PC-3 (cell line): ENCODE measurements at regions of chr2 and their contacts with region 1.

Region 1: GRCh38 chr2:65382776-65383357 is 49.5 kb downstream of the SPRED2 start:
- DNase-seq: peak; percentile 99
- ATAC-seq: peak; percentile 78
- H3K4me3 ChIP-seq: peak overlapping the region; percentile 40; the same call in 1 of the 2 replicates
- H3K27ac ChIP-seq: peak overlapping the region; percentile 94
- H3K4me1 ChIP-seq: peaks cover 76% of the 10 kb centered on the region
- H3K27me3 ChIP-seq: no peaks in the 10 kb centered on the region
- CTCF ChIP-seq: peak; percentile 73

Region 2: DNA sequence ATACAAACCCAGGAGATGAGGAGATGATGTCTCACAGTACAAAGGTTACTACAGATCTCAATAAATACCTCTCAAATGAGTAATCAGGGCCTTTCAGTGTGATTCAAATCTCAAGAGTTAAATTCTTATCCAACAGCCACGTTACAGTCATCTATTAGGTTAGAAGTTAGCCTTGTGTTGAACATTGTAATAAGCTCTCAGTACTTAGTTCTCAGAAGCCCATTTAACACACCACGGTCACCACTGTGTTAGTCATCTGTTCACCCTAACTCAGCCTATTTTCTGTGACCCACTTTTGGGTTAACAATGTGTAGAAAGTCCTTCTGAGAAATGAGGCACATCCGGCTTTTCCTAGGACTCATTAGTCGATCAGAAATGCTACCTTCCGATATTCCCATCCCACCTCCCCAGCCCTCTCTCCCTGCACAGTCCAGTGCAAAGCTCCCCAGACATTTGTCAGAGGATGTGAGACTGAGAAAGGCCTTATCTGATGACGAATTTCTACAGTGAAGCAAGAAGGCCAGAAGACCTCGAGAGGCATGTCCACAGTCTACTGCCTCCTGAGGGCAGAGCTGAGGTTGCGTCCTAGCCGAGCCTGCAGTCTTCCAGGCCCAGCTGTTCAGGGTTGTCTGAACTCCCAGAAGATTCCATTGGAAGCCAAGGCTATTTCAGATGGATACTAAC is 62.7 kb before region 1 on chr2:
- CTCF ChIA-PET with region 1: no interaction called
- POLR2A ChIA-PET with region 1: no interaction called
- intact Hi-C with region 1: loop called (anchors 5 kb)
- DNase-seq: peak; percentile 97
- ATAC-seq: peak; percentile 76
- H3K4me3 ChIP-seq: peak overlapping the region; percentile 33; the same call in 1 of the 2 replicates
- H3K27ac ChIP-seq: peak overlapping the region; percentile 93
- H3K4me1 ChIP-seq: peaks cover 75% of the 10 kb centered on the region
- H3K27me3 ChIP-seq: no peaks in the 10 kb centered on the region
- CTCF ChIP-seq: peak; percentile 74

Region 3: DNA sequence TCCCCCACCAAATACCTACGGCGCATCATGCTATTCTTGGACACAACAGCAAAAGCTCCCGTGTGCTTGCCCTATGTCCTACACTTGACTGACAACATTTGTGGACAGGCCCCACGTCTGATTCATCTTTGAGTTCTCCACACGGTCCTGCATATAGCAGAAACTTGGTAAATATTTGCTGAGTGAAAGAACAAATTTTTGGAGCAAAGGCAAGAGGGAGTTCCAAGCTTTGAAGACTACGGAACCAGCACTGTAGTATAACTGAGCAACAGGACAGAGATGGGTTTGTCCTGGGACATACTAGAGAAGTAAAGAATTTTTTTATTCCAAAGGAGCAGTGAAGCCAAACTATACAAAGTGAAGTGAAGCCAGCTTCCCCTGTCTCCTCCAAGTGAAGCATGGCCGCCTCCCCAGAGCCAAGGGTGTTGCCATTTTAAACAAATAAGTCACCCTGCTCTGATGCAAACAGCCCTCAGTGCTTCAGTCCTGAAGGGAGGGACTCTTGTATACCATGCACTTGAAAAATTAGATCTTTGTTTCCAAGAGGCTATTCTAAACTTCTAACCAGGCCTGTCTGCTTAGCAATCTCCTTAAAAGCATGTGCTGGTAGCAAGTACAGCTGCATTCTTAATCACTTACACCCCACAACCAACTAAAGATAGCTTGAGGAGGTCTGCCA is 13.6 kb after region 1 on chr2:
- CTCF ChIA-PET with region 1: interaction called, 3 read pairs
- POLR2A ChIA-PET with region 1: interaction called, 5 read pairs
- intact Hi-C with region 1: loop called (anchors 2 kb)
- DNase-seq: peak; percentile 84
- ATAC-seq: peak; percentile 84
- H3K4me3 ChIP-seq: peak overlapping the region; percentile 58
- H3K27ac ChIP-seq: peak overlapping the region; percentile 94
- H3K4me1 ChIP-seq: peaks cover 39% of the 10 kb centered on the region
- H3K27me3 ChIP-seq: no peaks in the 10 kb centered on the region
- CTCF ChIP-seq: no peak

Region 4: GRCh38 chr2:65514555-65515195 is 131.8 kb after region 1 on chr2:
- CTCF ChIA-PET with region 1: no interaction called
- POLR2A ChIA-PET with region 1: no interaction called
- intact Hi-C with region 1: no loop called
- DNase-seq: no peak
- ATAC-seq: no peak
- H3K4me3 ChIP-seq: no peak overlapping the region
- H3K27ac ChIP-seq: no peak overlapping the region
- H3K4me1 ChIP-seq: no peaks in the 10 kb centered on the region
- H3K27me3 ChIP-seq: no peaks in the 10 kb centered on the region
- CTCF ChIP-seq: no peak

Region 5: DNA sequence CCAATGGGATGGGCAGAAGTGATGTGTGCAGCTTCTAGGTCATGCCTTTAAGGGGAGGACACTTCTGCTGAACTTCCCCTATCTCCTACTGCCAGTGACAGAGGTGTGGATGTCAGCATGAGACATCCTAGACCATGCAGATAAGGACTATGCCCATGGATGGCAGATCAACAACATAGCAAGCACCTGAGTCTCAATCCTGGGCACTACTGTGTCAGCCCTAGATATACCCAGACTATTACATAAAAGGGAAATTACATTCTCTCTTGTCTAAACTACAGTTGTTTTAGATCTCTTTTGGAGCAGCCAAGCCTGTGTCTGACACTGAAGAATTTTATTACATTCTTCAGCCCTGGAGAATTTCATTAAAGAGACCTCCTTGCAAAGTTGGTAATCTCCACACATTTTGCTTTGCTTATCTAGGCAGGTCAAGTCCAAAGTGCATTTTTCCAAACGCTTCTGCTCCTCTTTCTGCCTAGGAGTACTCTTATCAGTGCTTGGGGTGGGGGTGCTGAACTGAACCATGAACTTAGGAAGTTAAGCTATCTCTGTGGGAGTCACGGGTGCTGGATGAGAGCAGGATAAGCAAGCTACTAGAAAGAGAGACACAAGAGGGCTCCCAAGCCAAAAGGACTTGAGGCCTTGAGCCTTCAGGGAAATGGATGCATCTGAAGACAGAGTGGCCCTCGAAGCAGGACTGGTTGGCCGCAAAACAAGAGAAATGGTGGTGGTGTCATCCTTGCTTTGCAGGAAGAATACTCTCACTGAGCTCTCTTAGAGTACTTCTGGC is 144.8 kb after region 1 on chr2:
- CTCF ChIA-PET with region 1: no interaction called
- POLR2A ChIA-PET with region 1: no interaction called
- intact Hi-C with region 1: no loop called
- DNase-seq: no peak
- ATAC-seq: no peak
- H3K4me3 ChIP-seq: no peak overlapping the region
- H3K27ac ChIP-seq: no peak overlapping the region
- H3K4me1 ChIP-seq: peaks cover 14% of the 10 kb centered on the region
- H3K27me3 ChIP-seq: no peaks in the 10 kb centered on the region
- CTCF ChIP-seq: no peak

Region 6: GRCh38 chr2:65554765-65555591 is 172.1 kb after region 1 on chr2:
- CTCF ChIA-PET with region 1: no interaction called
- POLR2A ChIA-PET with region 1: no interaction called
- intact Hi-C with region 1: loop called (anchors 1 kb)
- DNase-seq: peak; percentile 39
- ATAC-seq: peak; percentile 45
- H3K4me3 ChIP-seq: no peak overlapping the region
- H3K27ac ChIP-seq: no peak overlapping the region
- H3K4me1 ChIP-seq: peaks cover 5% of the 10 kb centered on the region
- H3K27me3 ChIP-seq: no peaks in the 10 kb centered on the region
- CTCF ChIP-seq: no peak